ENCODE measurements at regions of chr7 and their contacts with region 1.

Region 1: DNA sequence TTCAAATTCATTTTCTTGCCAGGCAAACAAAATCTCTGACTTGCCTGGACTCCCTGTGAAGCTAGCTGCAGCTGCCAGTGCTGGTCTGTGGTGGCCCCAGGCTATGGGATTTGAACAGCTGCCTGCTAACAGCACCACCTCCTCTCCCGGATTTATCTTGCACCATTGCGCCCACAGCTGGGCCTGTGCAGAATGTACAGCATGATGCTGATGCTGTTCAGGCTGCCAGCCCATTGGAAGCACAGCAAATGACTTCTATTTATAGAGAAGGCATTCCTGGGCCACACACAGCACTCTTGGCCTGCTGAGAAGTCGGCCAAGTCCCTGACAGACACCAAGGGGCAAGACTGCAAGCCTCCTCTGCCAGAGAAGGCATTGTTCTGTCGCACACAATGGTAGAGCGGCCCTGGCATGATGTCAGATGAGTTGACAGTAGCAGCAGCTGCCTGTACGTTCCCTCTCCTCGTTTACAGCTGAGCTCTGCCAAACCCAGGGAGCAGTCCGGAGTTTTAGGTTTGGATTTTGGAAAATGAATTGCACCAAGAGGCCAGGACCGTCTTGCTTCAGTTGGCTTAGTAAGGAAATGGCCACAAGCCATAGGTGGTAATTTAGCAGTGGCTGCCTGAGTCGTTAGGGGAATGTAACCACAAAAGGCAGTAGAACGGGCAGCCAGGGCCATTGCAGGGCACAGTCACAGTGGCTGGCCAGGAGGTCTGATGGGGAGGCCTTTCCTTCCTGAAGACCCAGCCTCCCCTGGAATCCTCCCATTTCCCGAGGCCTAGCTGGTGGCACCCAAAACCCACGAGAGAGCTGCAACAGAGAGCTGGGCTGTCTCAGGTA is 38.5 kb downstream of the MTURN start:
- DNase-seq: peak in 1 of 2 donors; percentile 95
- H3K4me3 ChIP-seq: no peak overlapping the region
- H3K27ac ChIP-seq: peak overlapping the region; percentile 81
- H3K4me1 ChIP-seq: peaks cover 52% of the 10 kb centered on the region
- H3K27me3 ChIP-seq: no peaks in the 10 kb centered on the region
- CTCF ChIP-seq: no peak
- POLR2A ChIP-seq: no peak

Region 2: DNA sequence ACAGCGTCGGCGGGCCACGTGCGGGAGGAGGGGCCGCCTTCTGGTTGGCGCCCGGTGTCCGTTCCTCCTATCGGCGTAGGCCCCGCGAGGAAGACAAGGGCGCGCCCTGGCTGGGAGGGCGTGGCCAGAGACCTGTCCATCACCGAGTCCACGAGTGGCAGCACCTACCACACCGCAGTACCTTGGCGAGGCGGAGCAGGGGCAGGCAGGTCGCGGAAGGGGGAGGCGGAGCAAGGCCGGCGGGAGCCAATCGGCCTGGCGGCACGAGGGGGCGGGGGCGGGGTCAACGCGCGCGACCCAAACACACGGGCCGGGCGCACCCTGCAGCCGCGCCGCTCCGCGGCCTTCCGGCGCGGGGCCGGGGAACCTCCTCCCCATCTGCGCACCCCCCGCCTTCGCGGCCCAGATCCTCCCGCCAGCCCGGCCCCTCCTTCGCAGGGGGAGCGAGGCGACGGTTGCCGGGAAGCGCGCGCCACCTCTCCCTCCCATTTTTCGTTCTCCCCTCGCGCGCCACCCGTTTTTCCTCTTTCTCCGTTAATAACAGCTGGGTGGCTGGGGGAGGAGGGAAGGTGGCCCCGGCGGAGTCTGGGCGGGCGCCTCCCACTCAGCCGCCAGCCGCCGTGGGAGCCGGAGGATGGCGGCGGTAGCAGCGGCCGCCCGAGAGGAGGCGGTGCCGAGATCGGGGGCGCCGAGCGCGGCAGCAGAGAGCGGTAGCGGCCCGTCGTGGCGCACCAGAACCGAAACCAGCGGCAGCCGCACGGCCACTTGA is 111.2 kb after region 1 on chr7 and contains the start of gene ZNRF2:
- intact Hi-C with region 1: loop called (anchors 10 kb)
- DNase-seq: peak; percentile 99 to 100
- H3K4me3 ChIP-seq: peak within 1 kb of the TSS; percentile 79 to 96
- H3K27ac ChIP-seq: peak within 1 kb of the TSS; percentile 97
- H3K4me1 ChIP-seq: peaks cover 31% of the 10 kb centered on the region
- H3K27me3 ChIP-seq: no peaks in the 10 kb centered on the region
- CTCF ChIP-seq: peak in 2 of 3 experiments; percentile 25 to 35
- POLR2A ChIP-seq: peak in 1 of 2 donors; percentile 80
- total RNA-seq, gene ZNRF2: 21.9 TPM

Region 3: GRCh38 chr7:30412810-30413504 is 239.7 kb after region 1 on chr7:
- intact Hi-C with region 1: loop called (anchors 5 kb)
- DNase-seq: no peak
- H3K4me3 ChIP-seq: no peak overlapping the region
- H3K27ac ChIP-seq: no peak overlapping the region
- H3K4me1 ChIP-seq: no peaks in the 10 kb centered on the region
- H3K27me3 ChIP-seq: no peaks in the 10 kb centered on the region
- CTCF ChIP-seq: peak; percentile 3 to 61 (median 51)
- POLR2A ChIP-seq: no peak